K562 (cell line): ENCODE measurements at regions of chr1 and their contacts with region 1.

Region 1: DNA sequence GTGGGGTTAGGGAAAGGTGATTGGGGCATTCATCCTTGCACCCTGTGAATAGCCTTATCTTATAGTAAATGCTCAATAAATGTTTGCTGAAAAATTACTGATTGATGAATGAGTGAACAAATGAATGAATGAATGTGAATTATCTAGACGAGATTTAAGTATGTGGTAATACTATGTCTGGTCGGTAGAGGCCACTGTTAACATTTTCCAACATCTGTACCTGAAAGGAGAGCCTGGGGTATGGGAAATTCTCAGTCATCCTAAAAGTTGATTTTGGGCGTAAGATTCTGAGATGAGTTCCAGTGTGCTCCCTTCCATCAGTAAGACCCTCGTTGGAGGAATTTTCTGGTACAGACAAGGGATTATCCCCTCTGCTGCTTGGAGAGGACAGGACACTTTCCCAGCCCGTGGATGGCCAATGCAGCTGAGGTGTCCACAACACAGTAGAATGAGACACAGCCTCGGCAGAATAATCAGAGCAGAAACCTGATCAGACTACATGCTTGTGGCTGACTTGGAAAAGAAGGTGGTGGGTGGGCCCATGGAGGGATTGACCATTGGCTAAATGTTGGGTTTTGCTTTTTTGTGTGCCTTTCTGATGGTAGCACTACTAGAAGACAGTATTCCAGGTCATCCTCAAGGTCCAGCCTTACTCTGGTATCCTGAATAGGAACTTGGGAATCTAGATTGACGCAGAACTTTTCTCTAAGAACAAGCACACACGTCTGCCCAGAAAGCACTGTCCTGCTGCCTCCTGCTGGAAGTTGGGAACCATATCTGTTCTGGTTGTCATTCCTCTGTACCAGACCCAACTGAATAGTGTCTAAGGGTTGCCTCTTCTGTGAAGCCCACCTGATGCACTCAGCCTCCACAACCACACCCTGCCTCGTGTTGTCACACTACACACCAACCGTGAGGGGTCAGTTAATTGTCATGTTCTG is 262.0 kb downstream of the TNR start:
- DNase-seq: peak; percentile 32 to 57 (median 44)
- ATAC-seq: peak; percentile 91
- H3K4me3 ChIP-seq: no peak overlapping the region
- H3K27ac ChIP-seq: no peak overlapping the region
- H3K4me1 ChIP-seq: no peaks in the 10 kb centered on the region
- H3K27me3 ChIP-seq: no peaks in the 10 kb centered on the region; a peak in 1 of 5 replicates
- CTCF ChIP-seq: peak; percentile 40 to 76 (median 62); a peak in 5 of 6 replicates
- EP300 ChIP-seq: no peak
- POLR2A ChIP-seq: no peak
- RAD21 ChIP-seq: peak; percentile 45 to 67

Region 2: GRCh38 chr1:175514387-175514953 is 33.1 kb after region 1 on chr1:
- CTCF ChIA-PET with region 1: no interaction called
- POLR2A ChIA-PET with region 1: no interaction called
- in situ Hi-C with region 1: no loop called
- intact Hi-C with region 1: no loop called
- DNase-seq: no peak
- ATAC-seq: no peak
- H3K4me3 ChIP-seq: no peak overlapping the region
- H3K27ac ChIP-seq: no peak overlapping the region
- H3K4me1 ChIP-seq: no peaks in the 10 kb centered on the region
- H3K27me3 ChIP-seq: no peaks in the 10 kb centered on the region
- CTCF ChIP-seq: no peak
- EP300 ChIP-seq: no peak
- POLR2A ChIP-seq: no peak
- RAD21 ChIP-seq: no peak

Region 3: GRCh38 chr1:175742790-175743459 is 261.5 kb after region 1 on chr1:
- CTCF ChIA-PET with region 1: no interaction called
- POLR2A ChIA-PET with region 1: no interaction called
- in situ Hi-C with region 1: no loop called
- intact Hi-C with region 1: loop called (anchors 10 kb)
- DNase-seq: peak in 2 of 4 experiments; percentile 19 to 32
- ATAC-seq: peak; percentile 86
- H3K4me3 ChIP-seq: no peak overlapping the region
- H3K27ac ChIP-seq: no peak overlapping the region
- H3K4me1 ChIP-seq: no peaks in the 10 kb centered on the region
- H3K27me3 ChIP-seq: peaks cover 0 to 6% of the 10 kb centered on the region in 2 experiments; a peak in 1 of 5 replicates
- CTCF ChIP-seq: no peak
- EP300 ChIP-seq: no peak
- POLR2A ChIP-seq: no peak
- RAD21 ChIP-seq: no peak

Region 4: GRCh38 chr1:175824079-175824478 is 342.7 kb after region 1 on chr1:
- CTCF ChIA-PET with region 1: no interaction called
- POLR2A ChIA-PET with region 1: no interaction called
- in situ Hi-C with region 1: no loop called
- intact Hi-C with region 1: loop called (anchors 10 kb)
- DNase-seq: peak; percentile 21 to 58 (median 28)
- ATAC-seq: peak; percentile 78
- H3K4me3 ChIP-seq: no peak overlapping the region
- H3K27ac ChIP-seq: no peak overlapping the region
- H3K4me1 ChIP-seq: no peaks in the 10 kb centered on the region
- H3K27me3 ChIP-seq: no peaks in the 10 kb centered on the region
- CTCF ChIP-seq: peak; percentile 68 to 73 (median 70)
- EP300 ChIP-seq: no peak
- POLR2A ChIP-seq: no peak
- RAD21 ChIP-seq: peak in 1 of 2 experiments; percentile 57; a peak in 3 of 4 replicates

Region 5: DNA sequence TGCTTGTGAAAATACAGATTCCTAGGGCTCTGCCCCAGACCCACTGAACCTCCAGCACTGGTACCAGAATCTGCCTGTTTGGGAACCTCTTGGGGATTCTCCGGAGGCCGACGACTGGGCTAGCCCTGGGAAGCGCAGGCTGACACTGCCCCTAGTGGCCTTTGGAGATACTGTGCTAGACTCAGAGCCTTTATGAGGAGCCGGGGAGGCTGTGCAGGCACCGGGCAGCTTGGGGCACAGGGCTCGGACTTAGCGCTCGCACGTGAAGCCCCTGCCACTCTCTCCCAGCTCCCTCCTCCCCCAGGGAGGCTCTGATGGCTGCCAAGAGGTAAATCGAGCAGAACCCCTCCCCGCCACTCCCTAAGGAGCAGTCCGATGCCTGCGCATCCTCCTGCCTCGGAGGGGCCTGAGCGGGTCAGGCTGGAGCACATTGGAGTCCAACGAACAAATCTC is 406.6 kb after region 1 on chr1:
- CTCF ChIA-PET with region 1: no interaction called
- POLR2A ChIA-PET with region 1: no interaction called
- in situ Hi-C with region 1: no loop called
- intact Hi-C with region 1: loop called (anchors 10 kb)
- DNase-seq: peak; percentile 74 to 83 (median 82)
- ATAC-seq: peak; percentile 99
- H3K4me3 ChIP-seq: no peak overlapping the region
- H3K27ac ChIP-seq: no peak overlapping the region
- H3K4me1 ChIP-seq: peaks cover 4 to 10% of the 10 kb centered on the region in 2 experiments; a peak in 4 of 5 replicates
- H3K27me3 ChIP-seq: peaks cover 15 to 61% of the 10 kb centered on the region in 2 experiments; a peak in 4 of 5 replicates
- CTCF ChIP-seq: peak; percentile 82 to 93 (median 83)
- EP300 ChIP-seq: no peak
- POLR2A ChIP-seq: no peak
- RAD21 ChIP-seq: peak; percentile 59 to 69